ENCODE measurements at regions of chr7 and their contacts with region 1.

Region 1: GRCh38 chr7:155368894-155369589 is 71.4 kb downstream of the INSIG1 start:
- DNase-seq: no peak
- H3K4me3 ChIP-seq: no peak overlapping the region
- CTCF ChIP-seq: no peak

Region 2: DNA sequence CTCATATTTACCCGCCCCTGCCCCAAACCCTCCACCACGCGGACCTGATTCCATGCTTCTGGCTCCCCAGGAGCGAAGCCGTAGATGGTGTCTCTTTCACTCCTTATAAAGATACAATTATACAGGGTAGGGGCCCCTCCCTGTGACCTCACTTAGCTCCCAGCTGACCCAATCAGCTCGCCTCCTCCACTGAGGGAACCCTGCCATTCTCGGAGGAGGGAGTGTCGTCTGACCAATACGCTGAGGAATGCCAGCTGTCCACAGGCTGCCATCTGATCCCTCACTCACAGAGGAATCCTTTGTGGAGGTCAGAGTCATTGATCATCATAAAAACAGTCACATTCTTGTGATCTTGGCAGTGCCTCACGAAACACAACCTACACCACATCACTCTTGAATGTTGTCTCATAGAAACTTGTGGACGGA is 138.9 kb before region 1 on chr7:
- CTCF ChIA-PET with region 1: no interaction called
- POLR2A ChIA-PET with region 1: no interaction called
- DNase-seq: peak; percentile 98
- H3K4me3 ChIP-seq: no peak overlapping the region
- CTCF ChIP-seq: no peak

Region 3: DNA sequence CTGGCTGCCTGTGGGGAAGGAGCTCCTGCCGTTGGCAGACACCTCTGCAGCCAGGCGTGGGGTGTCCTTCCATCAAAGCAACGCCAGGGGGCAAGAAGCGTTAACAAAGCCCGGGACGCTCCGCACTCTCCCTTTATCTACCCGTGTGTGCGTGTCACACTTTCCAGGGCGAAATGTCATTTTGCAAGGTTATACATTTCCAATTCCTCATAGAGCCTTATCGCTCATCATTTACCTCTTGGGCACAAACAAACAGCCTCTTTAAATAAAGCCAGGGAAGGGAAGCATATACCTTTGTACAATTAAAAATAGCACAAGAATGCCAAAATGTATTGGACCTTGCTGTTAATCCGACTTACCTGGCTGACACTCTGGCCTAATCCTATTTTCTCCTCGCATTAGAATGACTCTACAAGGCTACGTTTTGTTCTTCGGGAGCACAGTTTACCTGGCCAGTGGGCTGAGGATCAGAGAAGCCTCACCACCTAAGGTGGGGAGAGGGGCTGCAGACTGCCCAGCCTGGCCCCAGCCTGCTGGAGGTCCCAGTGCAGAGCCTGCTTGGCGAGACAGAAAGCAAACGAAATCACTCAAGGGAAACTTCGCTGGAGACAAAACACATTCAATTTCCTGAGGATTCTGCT is 11.3 kb after region 1 on chr7:
- CTCF ChIA-PET with region 1: interaction called, 14 read pairs
- POLR2A ChIA-PET with region 1: no interaction called
- DNase-seq: no peak
- H3K4me3 ChIP-seq: no peak overlapping the region
- CTCF ChIP-seq: peak; percentile 81